Naive thymus-derived CD4-positive, alpha-beta T cell (primary cell): ENCODE measurements at regions of chr14 and their contacts with region 1.

Region 1: DNA sequence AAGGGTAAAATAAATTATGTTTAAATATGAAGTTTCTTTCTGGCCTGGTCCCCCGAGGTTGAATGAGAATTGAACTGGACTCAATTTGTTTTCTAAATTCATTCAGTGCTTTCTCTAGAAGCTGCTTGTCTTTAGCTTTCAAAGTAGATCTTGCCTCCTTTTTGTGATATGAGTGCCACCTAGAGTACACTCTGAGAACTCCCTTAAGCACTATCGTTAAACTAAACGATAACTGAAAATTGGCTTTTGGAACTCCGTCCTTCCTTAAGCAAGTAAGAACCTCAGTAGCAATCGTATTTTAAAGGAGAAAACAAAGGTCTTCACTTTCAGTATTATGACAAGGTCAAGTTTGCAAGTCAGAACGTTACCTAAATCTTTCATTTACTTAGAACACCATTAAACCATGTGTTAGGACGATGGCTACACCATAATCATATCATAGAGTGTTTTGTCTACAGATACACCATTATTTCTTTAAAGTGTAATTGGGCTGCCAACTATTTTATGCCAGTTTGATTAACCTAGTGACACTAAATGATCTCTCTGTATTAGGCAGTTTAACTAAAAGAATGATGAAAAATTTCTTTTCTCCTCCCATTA is 364.8 kb downstream of the SNAPC1 start:
- DNase-seq: peak in 7 of 9 donors; percentile 13 to 64 (median 46)
- ATAC-seq: peak; percentile 65
- H3K4me3 ChIP-seq: no peak overlapping the region
- H3K4me3 Mint-ChIP-seq: no peak overlapping the region
- H3K27ac ChIP-seq: no peak overlapping the region
- H3K27ac Mint-ChIP-seq: no peak overlapping the region
- H3K4me1 ChIP-seq: no peaks in the 10 kb centered on the region
- H3K4me1 Mint-ChIP-seq: peaks cover 0 to 2% (median 0%) of the 10 kb centered on the region in 7 donors
- H3K27me3 ChIP-seq: peaks cover 0 to 5% of the 10 kb centered on the region in 2 donors
- H3K27me3 Mint-ChIP-seq: peaks cover 33 to 78% (median 58%) of the 10 kb centered on the region in 5 donors

Region 2: DNA sequence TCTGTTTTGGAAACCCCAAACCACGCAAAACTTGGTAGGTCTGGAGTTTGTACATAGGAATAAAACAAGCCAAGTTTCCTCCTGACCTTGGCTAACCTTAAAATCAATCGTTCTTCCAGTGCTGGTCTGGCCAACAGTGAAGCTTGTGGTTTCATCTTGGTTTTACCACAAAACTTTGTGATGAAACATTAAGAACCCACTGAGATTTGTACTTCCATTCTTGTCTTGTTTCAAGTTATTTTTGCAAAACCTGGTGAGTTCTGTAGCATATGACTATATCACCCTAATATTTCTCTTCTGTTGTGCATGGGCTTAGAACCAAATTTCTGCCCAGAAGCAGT is 1504.1 kb before region 1 on chr14:
- CTCF ChIA-PET with region 1: no interaction called
- POLR2A ChIA-PET with region 1: no interaction called
- intact Hi-C with region 1: loop called in 1 of 2 experiments (anchors 2 kb)
- DNase-seq: no peak
- ATAC-seq: no peak
- H3K4me3 ChIP-seq: no peak overlapping the region
- H3K4me3 Mint-ChIP-seq: no peak overlapping the region
- H3K27ac ChIP-seq: no peak overlapping the region
- H3K27ac Mint-ChIP-seq: no peak overlapping the region
- H3K4me1 ChIP-seq: no peaks in the 10 kb centered on the region
- H3K4me1 Mint-ChIP-seq: peaks cover 0 to 2% (median 0%) of the 10 kb centered on the region in 7 donors
- H3K27me3 ChIP-seq: no peaks in the 10 kb centered on the region
- H3K27me3 Mint-ChIP-seq: peaks cover 25 to 47% (median 34%) of the 10 kb centered on the region in 5 donors

Region 3: DNA sequence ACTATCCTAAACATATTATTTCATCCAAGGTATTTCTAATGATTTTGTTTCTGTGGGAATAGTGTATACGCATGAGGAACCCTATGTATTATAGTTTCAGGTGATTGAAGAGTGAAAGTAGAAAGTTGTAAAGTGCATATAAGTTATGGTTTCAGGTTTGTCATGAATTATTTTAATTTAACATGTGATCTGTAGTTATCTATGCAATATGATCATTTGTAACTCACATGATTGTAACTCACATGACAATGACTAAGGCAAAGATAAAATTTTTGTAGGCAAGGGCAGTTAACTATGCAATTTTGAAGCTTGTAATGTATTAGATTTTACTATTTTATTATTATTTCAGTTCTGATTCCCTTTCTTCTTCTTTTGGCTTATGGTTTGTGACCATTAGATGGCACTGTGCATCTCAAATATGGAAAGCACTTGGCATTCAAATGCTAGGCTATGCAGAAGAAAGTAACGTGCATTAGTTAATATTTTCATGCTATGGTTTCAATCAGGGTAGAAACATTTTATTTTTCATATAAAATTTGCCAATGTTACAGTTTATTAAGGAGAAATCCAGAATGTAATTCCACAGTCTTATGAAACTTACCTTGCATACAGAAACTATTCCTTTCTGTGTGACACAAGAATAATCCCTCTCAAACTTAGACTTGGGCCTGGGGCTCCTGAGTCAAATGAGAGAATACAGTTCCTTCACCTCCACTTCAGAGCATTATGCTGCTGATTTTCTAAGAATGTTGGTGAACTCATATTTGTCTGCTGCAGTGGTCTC is 830.1 kb before region 1 on chr14:
- CTCF ChIA-PET with region 1: no interaction called
- POLR2A ChIA-PET with region 1: no interaction called
- intact Hi-C with region 1: loop called in 1 of 2 experiments (anchors 10 kb)
- DNase-seq: peak in 7 of 9 donors; percentile 38 to 68 (median 52)
- ATAC-seq: peak; percentile 85
- H3K4me3 ChIP-seq: no peak overlapping the region
- H3K4me3 Mint-ChIP-seq: peak overlapping the region in 2 of 10 donors; percentile 20 to 39
- H3K27ac ChIP-seq: no peak overlapping the region
- H3K27ac Mint-ChIP-seq: peak overlapping the region in 7 of 9 donors; percentile 26 to 88 (median 66)
- H3K4me1 ChIP-seq: peaks cover 15 to 40% of the 10 kb centered on the region in 2 donors
- H3K4me1 Mint-ChIP-seq: peaks cover 18 to 59% (median 56%) of the 10 kb centered on the region in 7 donors
- H3K27me3 ChIP-seq: no peaks in the 10 kb centered on the region
- H3K27me3 Mint-ChIP-seq: no peaks in the 10 kb centered on the region

Region 4: GRCh38 chr14:61750708-61751474 is 376.1 kb before region 1 on chr14:
- CTCF ChIA-PET with region 1: no interaction called
- POLR2A ChIA-PET with region 1: no interaction called
- intact Hi-C with region 1: loop called in 1 of 2 experiments (anchors 5 kb)
- DNase-seq: peak; percentile 53 to 89 (median 66)
- ATAC-seq: peak; percentile 92
- H3K4me3 ChIP-seq: peak overlapping the region; percentile 55
- H3K4me3 Mint-ChIP-seq: peak overlapping the region; percentile 75 to 94 (median 85)
- H3K27ac ChIP-seq: peak overlapping the region; percentile 75
- H3K27ac Mint-ChIP-seq: peak overlapping the region; percentile 26 to 88 (median 70)
- H3K4me1 ChIP-seq: no peaks in the 10 kb centered on the region
- H3K4me1 Mint-ChIP-seq: peaks cover 4 to 63% (median 11%) of the 10 kb centered on the region in 7 donors
- H3K27me3 ChIP-seq: no peaks in the 10 kb centered on the region
- H3K27me3 Mint-ChIP-seq: peaks cover 0 to 8% (median 1%) of the 10 kb centered on the region in 5 donors

Region 5: GRCh38 chr14:61860294-61860918 is 266.6 kb before region 1 on chr14:
- CTCF ChIA-PET with region 1: interaction called, 3 read pairs
- POLR2A ChIA-PET with region 1: no interaction called
- intact Hi-C with region 1: loop called (anchors 1 kb)
- DNase-seq: peak in 8 of 9 donors; percentile 9 to 55 (median 45)
- ATAC-seq: peak; percentile 89
- H3K4me3 ChIP-seq: no peak overlapping the region
- H3K4me3 Mint-ChIP-seq: no peak overlapping the region
- H3K27ac ChIP-seq: no peak overlapping the region
- H3K27ac Mint-ChIP-seq: peak overlapping the region in 1 of 9 donors; percentile 19
- H3K4me1 ChIP-seq: no peaks in the 10 kb centered on the region
- H3K4me1 Mint-ChIP-seq: peaks cover 0 to 5% (median 0%) of the 10 kb centered on the region in 7 donors
- H3K27me3 ChIP-seq: no peaks in the 10 kb centered on the region
- H3K27me3 Mint-ChIP-seq: peaks cover 5 to 55% (median 17%) of the 10 kb centered on the region in 5 donors

Region 6: DNA sequence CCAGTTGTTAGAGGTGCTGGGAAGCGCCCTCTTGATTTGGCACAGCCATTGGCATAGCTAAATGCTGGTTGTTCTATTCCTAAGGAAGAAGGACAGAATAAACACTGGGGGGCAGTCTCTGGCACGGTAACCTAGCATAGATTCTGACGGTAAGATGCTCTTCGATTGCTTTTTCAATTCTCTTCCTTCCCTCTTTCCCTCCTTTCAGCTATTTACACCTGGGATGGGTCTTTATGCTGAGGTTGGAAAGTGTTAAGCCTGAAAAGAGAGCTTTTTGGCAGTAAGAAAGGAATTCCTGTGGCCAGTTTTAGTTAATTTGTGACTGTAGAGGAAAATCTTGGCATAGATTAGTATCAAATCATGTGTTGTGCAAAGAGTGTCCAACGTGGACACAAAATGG is 201.9 kb before region 1 on chr14:
- CTCF ChIA-PET with region 1: interaction called, 14 read pairs
- POLR2A ChIA-PET with region 1: no interaction called
- intact Hi-C with region 1: loop called in 1 of 2 experiments (anchors 1 kb)
- DNase-seq: peak in 6 of 9 donors; percentile 3 to 30 (median 16)
- ATAC-seq: no peak
- H3K4me3 ChIP-seq: no peak overlapping the region
- H3K4me3 Mint-ChIP-seq: no peak overlapping the region
- H3K27ac ChIP-seq: no peak overlapping the region
- H3K27ac Mint-ChIP-seq: no peak overlapping the region
- H3K4me1 ChIP-seq: no peaks in the 10 kb centered on the region
- H3K4me1 Mint-ChIP-seq: peaks cover 0 to 3% (median 0%) of the 10 kb centered on the region in 7 donors
- H3K27me3 ChIP-seq: no peaks in the 10 kb centered on the region
- H3K27me3 Mint-ChIP-seq: peaks cover 13 to 47% (median 30%) of the 10 kb centered on the region in 5 donors